A549 (cell line): ENCODE measurements at regions of chr5 and their contacts with region 1.

Region 1: DNA sequence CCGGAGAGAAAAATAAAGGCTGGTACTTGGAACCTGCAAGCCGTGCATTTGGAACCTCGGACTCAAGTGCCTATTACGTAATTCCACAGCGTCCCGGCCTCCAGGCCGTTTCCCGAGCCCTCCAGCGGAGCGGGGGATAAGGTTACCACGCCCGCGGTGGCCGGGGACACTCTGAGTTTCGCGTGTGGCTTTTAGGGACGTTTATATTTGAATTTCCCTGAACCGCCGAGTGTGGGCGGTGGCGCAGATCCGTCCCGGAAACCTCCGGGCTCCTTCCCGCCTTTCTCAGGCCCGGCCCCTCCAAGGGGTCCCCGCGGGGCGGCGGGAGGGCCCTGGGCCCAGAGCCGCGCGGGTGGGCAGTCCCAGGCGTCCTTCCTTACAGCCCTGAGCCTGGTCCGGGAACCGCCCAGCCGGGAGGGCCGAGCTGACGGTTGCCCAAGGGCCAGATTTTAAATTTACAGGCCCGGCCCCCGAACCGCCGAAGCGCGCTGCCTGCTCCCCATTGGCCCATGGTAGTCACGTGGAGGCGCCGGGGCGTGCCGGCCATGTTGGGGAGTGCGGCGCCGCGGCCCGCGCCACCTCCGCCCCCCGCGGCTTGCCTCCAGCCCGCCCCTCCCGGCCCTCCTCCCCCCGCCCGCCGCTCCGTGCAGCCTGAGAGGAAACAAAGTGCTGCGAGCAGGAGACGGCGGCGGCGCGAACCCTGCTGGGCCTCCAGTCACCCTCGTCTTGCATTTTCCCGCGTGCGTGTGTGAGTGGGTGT is at the start of gene LMNB1:
- DNase-seq: peak; percentile 81 to 98
- ATAC-seq: peak; percentile 76 to 91
- H3K4me3 ChIP-seq: peak within 1 kb of the TSS; percentile 93
- H3K27ac ChIP-seq: peak within 1 kb of the TSS; percentile 94 to 97
- H3K4me1 ChIP-seq: peaks cover 21% of the 10 kb centered on the region
- CTCF ChIP-seq: no peak
- EP300 ChIP-seq: no peak
- POLR2A ChIP-seq: peak; percentile 58
- RAD21 ChIP-seq: no peak
- polyA plus RNA-seq, gene LMNB1: 37.0 and 45.9 TPM in 2 replicates

Region 2: DNA sequence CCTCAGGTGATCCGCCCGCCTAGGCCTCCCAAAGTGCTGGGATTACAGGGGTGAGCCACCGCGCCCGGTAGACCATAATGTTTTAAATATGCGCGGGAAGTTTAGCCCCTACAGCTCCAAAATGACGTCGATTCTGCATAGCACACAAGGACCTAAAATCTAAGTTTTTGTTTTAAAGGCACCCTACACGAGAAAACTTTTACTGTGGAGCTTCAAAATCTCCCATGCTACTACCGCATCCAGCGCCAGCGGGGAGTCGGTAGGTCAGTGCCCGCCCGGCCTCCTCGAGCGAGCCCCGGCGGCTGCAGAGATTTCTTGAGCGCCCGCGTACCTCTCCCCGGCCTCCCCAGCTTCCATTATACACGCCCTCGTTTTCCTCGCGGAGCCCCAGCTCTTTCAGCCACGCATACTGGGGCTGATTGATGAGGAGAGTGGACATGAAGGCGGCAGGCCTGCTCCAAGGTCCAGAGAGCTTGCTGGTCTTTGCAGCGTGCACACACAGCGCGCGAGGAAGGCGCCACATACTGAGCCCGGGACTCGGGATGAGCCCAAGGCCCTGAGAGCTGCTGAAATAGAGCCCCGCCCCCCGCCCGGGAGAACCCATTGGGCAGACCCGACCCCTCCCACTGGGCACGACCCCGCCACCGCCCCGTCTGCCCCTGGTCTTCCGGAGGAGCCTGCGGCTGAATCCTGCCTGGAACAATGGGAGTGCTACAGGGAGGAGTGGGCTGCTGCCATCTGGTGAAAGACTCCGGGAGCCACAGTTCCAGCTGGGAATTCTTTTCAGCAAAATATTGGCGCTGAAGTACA is 181.8 kb before region 1 on chr5 and contains the start of gene ALDH7A1:
- CTCF ChIA-PET with region 1: interaction called, 8 read pairs
- POLR2A ChIA-PET with region 1: interaction called, 14 read pairs
- DNase-seq: peak; percentile 96 to 97
- ATAC-seq: peak; percentile 98
- H3K4me3 ChIP-seq: peak within 1 kb of the TSS; percentile 54
- H3K27ac ChIP-seq: peak within 1 kb of the TSS; percentile 77 to 88
- H3K4me1 ChIP-seq: peaks cover 20% of the 10 kb centered on the region
- CTCF ChIP-seq: peak; percentile 68
- EP300 ChIP-seq: no peak
- POLR2A ChIP-seq: peak; percentile 99
- RAD21 ChIP-seq: peak; percentile 52 to 62
- polyA plus RNA-seq, gene ALDH7A1: 78.3 and 99.2 TPM in 2 replicates

Region 3: DNA sequence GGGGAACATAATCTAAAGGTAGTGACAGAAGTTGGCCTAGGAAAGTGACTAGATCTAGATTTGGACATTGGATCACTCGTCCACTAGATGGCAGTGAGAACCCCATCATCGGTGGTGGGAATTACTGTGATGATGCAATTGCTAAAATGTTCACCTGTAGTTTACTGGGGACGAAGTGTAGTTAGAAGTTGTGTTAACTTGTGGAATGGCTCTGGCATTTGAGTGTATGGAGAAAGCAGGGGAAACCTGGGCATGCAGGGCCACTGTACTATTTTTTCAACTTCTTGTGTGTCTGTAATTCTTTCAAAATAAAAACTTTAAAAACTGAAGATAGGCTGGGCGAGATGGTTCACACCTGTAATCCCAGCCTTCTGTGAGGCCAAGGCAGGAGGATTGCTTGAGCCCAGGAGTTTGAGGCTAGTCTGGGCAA is 100.5 kb before region 1 on chr5:
- CTCF ChIA-PET with region 1: interaction called, 206 read pairs
- POLR2A ChIA-PET with region 1: interaction called, 7 read pairs
- DNase-seq: peak; percentile 62 to 89
- ATAC-seq: peak; percentile 74 to 75
- H3K4me3 ChIP-seq: no peak overlapping the region
- H3K27ac ChIP-seq: peak overlapping the region in 1 of 2 experiments; percentile 55; a peak in 2 of 6 replicates
- H3K4me1 ChIP-seq: peaks cover 7% of the 10 kb centered on the region; the same call in 1 of the 3 replicates
- CTCF ChIP-seq: peak; percentile 92
- EP300 ChIP-seq: no peak
- POLR2A ChIP-seq: no peak
- RAD21 ChIP-seq: peak; percentile 88 to 90

Region 4: GRCh38 chr5:126794157-126794828 is 17.6 kb after region 1 on chr5:
- CTCF ChIA-PET with region 1: interaction called, 24 read pairs
- POLR2A ChIA-PET with region 1: interaction called, 7 read pairs
- DNase-seq: no peak
- ATAC-seq: 0 out of 6 replicates have a peak, but pooled peaks of 1 of the 2 experiments have one; percentile 18
- H3K4me3 ChIP-seq: no peak overlapping the region
- H3K27ac ChIP-seq: peak overlapping the region in 1 of 2 experiments; percentile 25; a peak in 3 of 6 replicates
- H3K4me1 ChIP-seq: peaks cover 15% of the 10 kb centered on the region; the same call in 2 of the 3 replicates
- CTCF ChIP-seq: no peak
- EP300 ChIP-seq: no peak
- POLR2A ChIP-seq: no peak
- RAD21 ChIP-seq: no peak

Region 5: DNA sequence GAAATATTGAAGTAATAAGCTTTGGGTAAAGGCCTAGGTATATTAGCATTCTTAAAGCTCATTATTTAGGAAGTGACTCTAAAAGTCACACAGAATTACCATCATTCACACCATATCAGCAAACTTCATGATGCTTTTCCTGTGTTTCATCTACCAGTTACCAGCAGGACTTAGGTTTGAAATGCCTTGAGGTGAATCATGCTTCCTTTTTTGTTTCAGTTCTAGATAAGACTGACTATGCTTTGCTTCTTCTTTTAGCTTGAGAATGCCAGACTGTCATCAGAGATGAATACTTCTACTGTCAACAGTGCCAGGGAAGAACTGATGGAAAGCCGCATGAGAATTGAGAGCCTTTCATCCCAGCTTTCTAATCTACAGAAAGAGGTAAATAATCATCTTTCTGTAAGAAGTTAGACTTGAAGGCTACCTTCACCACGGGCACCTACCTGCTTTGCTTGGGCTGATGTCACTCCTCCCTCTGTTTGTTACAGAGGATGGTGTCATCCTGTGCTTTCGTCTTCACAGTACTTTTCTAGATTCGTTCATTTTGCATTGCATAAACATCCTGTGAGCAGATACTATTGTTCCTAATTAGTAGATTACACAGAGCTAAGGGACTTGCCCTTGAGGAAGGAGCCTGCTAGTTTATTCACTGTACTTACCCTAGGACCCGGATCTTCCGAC is 35.0 kb after region 1 on chr5:
- CTCF ChIA-PET with region 1: interaction called, 19 read pairs
- POLR2A ChIA-PET with region 1: no interaction called
- DNase-seq: no peak
- ATAC-seq: no peak
- H3K4me3 ChIP-seq: no peak overlapping the region
- H3K27ac ChIP-seq: no peak overlapping the region
- H3K4me1 ChIP-seq: peaks cover 19% of the 10 kb centered on the region
- CTCF ChIP-seq: no peak
- EP300 ChIP-seq: no peak
- POLR2A ChIP-seq: no peak
- RAD21 ChIP-seq: no peak

Region 6: DNA sequence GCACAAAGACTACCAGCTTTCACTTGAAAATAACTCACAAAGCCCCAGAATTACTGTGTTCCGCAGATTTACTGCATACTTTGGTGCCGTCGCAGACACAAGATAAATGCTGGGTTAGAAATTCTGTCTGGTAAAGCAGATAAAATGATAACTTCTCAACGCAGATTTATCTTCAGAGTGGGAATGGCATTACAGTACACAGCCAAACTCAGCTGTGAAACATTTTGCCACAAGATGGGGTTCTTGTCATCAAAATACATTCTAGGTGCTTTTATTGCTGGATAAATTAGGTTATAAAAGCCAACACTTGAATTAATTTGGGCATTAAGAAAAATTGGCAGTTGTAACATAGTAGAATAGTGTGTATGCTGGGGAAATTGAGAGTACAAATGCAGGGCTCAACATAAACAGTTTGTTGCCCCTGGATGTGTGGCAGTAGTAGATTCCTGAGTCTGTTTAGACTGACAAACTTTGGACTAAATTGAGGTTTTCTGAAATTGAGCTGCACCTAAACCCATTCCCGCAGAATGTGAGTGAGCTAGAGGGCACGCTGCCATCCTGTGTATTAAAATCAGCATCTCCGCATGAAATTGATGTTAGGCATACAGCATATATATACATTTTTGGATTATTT is 61.3 kb after region 1 on chr5:
- CTCF ChIA-PET with region 1: no interaction called
- POLR2A ChIA-PET with region 1: no interaction called
- DNase-seq: no peak
- ATAC-seq: no peak
- H3K4me3 ChIP-seq: no peak overlapping the region
- H3K27ac ChIP-seq: no peak overlapping the region
- H3K4me1 ChIP-seq: no peaks in the 10 kb centered on the region
- CTCF ChIP-seq: peak; percentile 22; the same call in 1 of the 3 replicates
- EP300 ChIP-seq: no peak
- POLR2A ChIP-seq: no peak
- RAD21 ChIP-seq: peak in 1 of 2 experiments; percentile 33; a peak in 1 of 5 replicates